Common myeloid progenitor, CD34-positive (primary cell): ENCODE measurements at regions of chr6 and their contacts with region 1.

Region 1: GRCh38 chr6:26234421-26235296 is 130.3 kb upstream of the BTN3A2 start:
- DNase-seq: peak; percentile 76 to 93 (median 93)
- H3K4me3 ChIP-seq: peak overlapping the region; percentile 41 to 88 (median 80)
- H3K27ac ChIP-seq: peak overlapping the region; percentile 79 to 91
- H3K4me1 ChIP-seq: peaks cover 7 to 28% (median 22%) of the 10 kb centered on the region in 4 experiments
- H3K27me3 ChIP-seq: no peaks in the 10 kb centered on the region

Region 2: GRCh38 chr6:25743868-25744267 is 490.8 kb before region 1 on chr6:
- CTCF ChIA-PET with region 1: no interaction called
- POLR2A ChIA-PET with region 1: no interaction called
- DNase-seq: no peak
- H3K4me3 ChIP-seq: no peak overlapping the region
- H3K27ac ChIP-seq: no peak overlapping the region
- H3K4me1 ChIP-seq: peaks cover 0 to 5% (median under 1%) of the 10 kb centered on the region in 4 experiments
- H3K27me3 ChIP-seq: no peaks in the 10 kb centered on the region

Region 3: DNA sequence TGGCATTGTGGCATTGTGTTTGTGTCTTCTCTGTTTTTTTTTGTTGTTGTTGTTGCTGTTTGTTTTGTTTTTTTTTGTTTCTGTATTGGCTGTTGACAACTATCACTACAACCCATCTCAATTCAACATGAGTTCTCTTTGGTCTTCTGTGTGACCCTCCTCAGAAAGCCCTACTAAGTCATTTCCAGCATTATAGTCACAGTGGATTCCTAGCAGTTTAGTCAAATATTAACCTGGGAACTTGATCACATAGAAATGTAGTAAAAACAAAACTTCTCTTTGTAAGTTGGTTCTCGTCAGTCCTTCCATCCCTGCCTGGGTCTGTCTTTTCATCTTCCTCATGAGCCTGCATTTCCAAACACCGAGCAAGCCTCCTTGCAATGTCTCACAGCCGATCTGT is 320.9 kb before region 1 on chr6:
- CTCF ChIA-PET with region 1: no interaction called
- POLR2A ChIA-PET with region 1: no interaction called
- DNase-seq: no peak
- H3K4me3 ChIP-seq: no peak overlapping the region
- H3K27ac ChIP-seq: no peak overlapping the region
- H3K4me1 ChIP-seq: no peaks in the 10 kb centered on the region
- H3K27me3 ChIP-seq: no peaks in the 10 kb centered on the region

Region 4: GRCh38 chr6:26223650-26224546 is 10.8 kb before region 1 on chr6:
- CTCF ChIA-PET with region 1: interaction called, 7 read pairs
- POLR2A ChIA-PET with region 1: interaction called, 48 read pairs
- DNase-seq: peak; percentile 85 to 92 (median 91)
- H3K4me3 ChIP-seq: peak overlapping the region; percentile 34 to 99 (median 87)
- H3K27ac ChIP-seq: peak overlapping the region; percentile 87 to 92
- H3K4me1 ChIP-seq: peaks cover 15 to 51% (median 23%) of the 10 kb centered on the region in 4 experiments
- H3K27me3 ChIP-seq: no peaks in the 10 kb centered on the region

Region 5: GRCh38 chr6:26249957-26250697 is 15.5 kb after region 1 on chr6:
- CTCF ChIA-PET with region 1: interaction called, 31 read pairs
- POLR2A ChIA-PET with region 1: interaction called, 32 read pairs
- DNase-seq: peak; percentile 85 to 92 (median 89)
- H3K4me3 ChIP-seq: peak overlapping the region; percentile 72 to 96 (median 82)
- H3K27ac ChIP-seq: peak overlapping the region; percentile 80 to 94
- H3K4me1 ChIP-seq: peaks cover 9 to 34% (median 20%) of the 10 kb centered on the region in 4 experiments
- H3K27me3 ChIP-seq: no peaks in the 10 kb centered on the region

Region 6: DNA sequence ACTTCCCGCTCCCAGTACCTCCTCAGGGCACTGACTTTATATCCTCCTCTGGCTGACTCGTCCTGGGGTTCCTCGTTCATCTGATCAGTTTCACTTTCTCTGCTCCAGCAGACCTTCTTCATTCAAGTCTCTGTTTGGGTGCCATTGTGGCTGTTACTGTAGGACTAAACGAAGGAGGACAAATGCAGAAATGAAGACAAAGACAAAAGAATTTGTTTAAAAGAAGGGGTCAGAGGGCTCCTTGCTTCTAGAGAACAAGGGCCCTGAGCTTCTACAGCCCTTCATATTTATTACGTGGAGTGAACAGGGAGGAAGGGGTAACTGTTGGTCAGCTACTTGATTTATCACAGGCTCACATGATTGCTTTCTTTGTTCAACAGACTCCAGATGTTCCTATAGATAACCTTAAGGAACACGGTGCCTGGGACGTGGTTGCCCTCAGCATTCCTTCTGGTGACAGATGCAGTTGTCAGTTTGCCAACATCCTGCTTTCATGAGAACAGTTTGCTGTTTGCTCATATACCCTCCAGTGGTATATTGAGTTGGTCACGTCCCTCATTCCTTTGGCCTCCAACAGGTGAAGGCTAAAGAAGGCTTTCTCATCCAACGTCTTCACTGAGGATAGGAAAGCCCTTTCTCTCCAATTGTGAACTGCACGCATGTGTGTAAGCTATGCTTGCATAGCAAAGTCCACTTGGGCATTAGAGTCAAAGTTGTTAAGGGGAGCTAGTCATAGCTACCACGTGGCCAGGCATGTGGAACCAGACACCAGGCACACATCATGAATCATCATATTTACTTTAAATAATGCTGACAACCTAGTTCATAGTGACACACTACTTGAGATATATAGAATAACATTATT is 61.3 kb after region 1 on chr6:
- CTCF ChIA-PET with region 1: no interaction called
- POLR2A ChIA-PET with region 1: no interaction called
- DNase-seq: peak; percentile 42 to 85 (median 81)
- H3K4me3 ChIP-seq: peak overlapping the region in 2 of 7 experiments; percentile 24 to 33
- H3K27ac ChIP-seq: peak overlapping the region in 1 of 2 experiments; percentile 74
- H3K4me1 ChIP-seq: peaks cover 0 to 18% (median 14%) of the 10 kb centered on the region in 4 experiments
- H3K27me3 ChIP-seq: no peaks in the 10 kb centered on the region

Region 7: GRCh38 chr6:26351544-26351953 is 116.9 kb after region 1 on chr6:
- CTCF ChIA-PET with region 1: no interaction called
- POLR2A ChIA-PET with region 1: no interaction called
- DNase-seq: peak in 1 of 3 donors; percentile 36
- H3K4me3 ChIP-seq: no peak overlapping the region
- H3K27ac ChIP-seq: no peak overlapping the region
- H3K4me1 ChIP-seq: no peaks in the 10 kb centered on the region
- H3K27me3 ChIP-seq: no peaks in the 10 kb centered on the region